Caco-2 (cell line): ENCODE measurements at regions of chr1 and their contacts with region 1.

Region 1: GRCh38 chr1:153494976-153495535 is 34.6 kb upstream of the S100A7 start:
- DNase-seq: peak; percentile 82 to 90
- H3K4me3 ChIP-seq: no peak overlapping the region
- H3K4me3 Mint-ChIP-seq: no peak overlapping the region
- H3K27ac Mint-ChIP-seq: peak overlapping the region; percentile 17
- H3K4me1 ChIP-seq: no peaks in the 10 kb centered on the region
- H3K4me1 Mint-ChIP-seq: no peaks in the 10 kb centered on the region
- H3K27me3 ChIP-seq: no peaks in the 10 kb centered on the region
- H3K27me3 Mint-ChIP-seq: peaks cover 16% of the 10 kb centered on the region
- CTCF ChIP-seq: peak; percentile 89 to 92

Region 2: DNA sequence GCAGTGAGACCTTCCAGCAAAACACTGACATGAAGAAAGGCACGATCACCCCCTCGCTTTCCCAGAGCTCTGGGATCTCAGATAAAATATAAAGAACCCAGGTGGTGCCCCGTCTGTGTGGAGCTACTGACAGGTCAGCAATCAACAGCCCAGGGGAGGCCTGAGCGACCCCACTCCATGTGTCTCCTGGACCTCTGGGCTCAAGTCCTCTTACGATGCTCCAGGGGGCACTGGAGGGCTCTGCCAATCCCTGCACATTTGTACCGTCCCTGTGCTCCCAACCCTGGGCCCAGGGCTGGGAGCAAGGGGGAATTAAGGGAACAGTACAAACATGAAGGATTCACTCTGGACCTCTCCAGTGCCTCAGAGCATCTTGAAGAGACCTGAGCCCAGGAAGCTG is 66.3 kb before region 1 on chr1:
- CTCF ChIA-PET with region 1: no interaction called
- POLR2A ChIA-PET with region 1: no interaction called
- intact Hi-C with region 1: loop called (anchors 2 kb)
- DNase-seq: no peak
- H3K4me3 ChIP-seq: no peak overlapping the region
- H3K4me3 Mint-ChIP-seq: no peak overlapping the region
- H3K27ac Mint-ChIP-seq: no peak overlapping the region
- H3K4me1 ChIP-seq: no peaks in the 10 kb centered on the region
- H3K4me1 Mint-ChIP-seq: no peaks in the 10 kb centered on the region
- H3K27me3 ChIP-seq: no peaks in the 10 kb centered on the region
- H3K27me3 Mint-ChIP-seq: peaks cover 19% of the 10 kb centered on the region
- CTCF ChIP-seq: no peak

Region 3: DNA sequence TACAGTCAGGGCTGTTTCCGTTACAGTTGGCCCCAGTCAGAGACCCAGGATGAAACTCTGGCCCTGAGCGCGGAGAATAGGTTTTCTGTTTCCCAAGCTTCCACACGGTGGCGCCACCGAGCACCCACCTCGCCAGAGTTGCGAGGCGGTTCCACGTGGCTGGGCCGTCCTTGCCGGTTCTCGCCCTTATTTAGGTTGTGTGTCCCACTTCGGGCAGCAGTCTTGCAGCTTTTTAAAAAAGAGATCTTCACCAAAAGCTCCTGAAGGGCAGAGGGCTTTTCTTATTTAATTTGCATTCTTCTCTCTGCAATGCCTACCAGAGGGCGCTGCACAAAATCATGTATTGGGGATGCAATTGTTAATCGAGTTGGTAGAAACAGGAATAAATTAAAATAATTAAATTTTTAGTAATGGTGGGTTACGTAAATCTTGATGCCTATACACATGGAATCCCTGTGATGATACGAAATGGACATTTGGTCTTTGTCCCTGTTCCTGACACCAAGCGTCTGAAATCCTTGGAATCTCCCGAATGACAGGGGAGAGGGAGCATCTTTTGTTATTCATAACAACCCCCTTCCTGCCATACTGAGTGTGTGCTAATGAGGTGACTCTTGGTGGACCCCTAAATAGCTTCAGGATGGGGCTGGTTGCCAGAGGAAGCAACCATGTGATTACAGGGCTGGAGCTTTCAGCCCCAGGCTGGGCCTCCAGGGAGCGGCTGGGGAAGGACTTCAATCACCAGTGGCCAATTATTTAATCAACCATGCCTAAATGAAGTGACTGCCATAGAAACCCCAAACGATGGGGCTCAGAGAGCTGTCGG is 29.0 kb before region 1 on chr1:
- CTCF ChIA-PET with region 1: interaction called, 7 read pairs
- POLR2A ChIA-PET with region 1: no interaction called
- intact Hi-C with region 1: loop called (anchors 1 kb)
- DNase-seq: peak in 1 of 2 experiments; percentile 50
- H3K4me3 ChIP-seq: no peak overlapping the region
- H3K4me3 Mint-ChIP-seq: no peak overlapping the region
- H3K27ac Mint-ChIP-seq: no peak overlapping the region
- H3K4me1 ChIP-seq: no peaks in the 10 kb centered on the region
- H3K4me1 Mint-ChIP-seq: no peaks in the 10 kb centered on the region
- H3K27me3 ChIP-seq: no peaks in the 10 kb centered on the region; the same call in 1 of the 2 replicates
- H3K27me3 Mint-ChIP-seq: peaks cover 11% of the 10 kb centered on the region
- CTCF ChIP-seq: peak; percentile 51 to 54

Region 4: DNA sequence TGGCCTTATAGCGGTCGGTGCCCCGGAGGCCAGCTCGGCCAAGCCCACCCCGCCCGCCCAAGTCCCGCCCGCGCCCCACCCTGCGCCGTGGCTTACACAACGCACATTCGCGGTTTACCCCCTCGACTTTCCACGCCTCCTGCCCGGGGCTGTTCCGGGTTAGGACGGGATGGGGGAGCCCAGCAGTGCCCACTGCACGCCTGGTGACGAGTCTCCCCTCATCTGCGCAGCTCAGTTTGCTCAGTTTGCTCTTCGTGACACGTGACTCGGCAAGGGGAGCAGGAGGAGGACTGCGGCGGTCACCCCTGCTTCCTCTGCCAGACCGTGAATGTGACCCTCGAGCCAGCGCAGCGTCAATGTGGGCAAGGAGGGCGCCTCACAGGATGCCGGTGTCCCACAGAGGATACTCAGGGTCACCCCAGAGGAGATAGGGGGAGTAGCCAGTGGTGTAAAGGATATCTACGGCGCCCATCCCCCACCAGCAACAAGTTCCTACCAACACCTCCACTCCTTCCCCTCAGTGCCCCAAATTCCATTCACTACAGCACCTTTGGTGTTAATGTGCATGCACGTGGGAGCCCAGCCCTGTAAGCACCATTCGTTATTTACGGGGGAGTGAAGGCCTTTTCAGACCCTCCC is 41.1 kb after region 1 on chr1:
- CTCF ChIA-PET with region 1: no interaction called
- POLR2A ChIA-PET with region 1: no interaction called
- intact Hi-C with region 1: no loop called
- DNase-seq: peak; percentile 69 to 81
- H3K4me3 ChIP-seq: peak overlapping the region; percentile 44
- H3K4me3 Mint-ChIP-seq: peak overlapping the region; percentile 95
- H3K27ac Mint-ChIP-seq: peak overlapping the region; percentile 94
- H3K4me1 ChIP-seq: peaks cover 37% of the 10 kb centered on the region
- H3K4me1 Mint-ChIP-seq: peaks cover 31% of the 10 kb centered on the region
- H3K27me3 ChIP-seq: no peaks in the 10 kb centered on the region
- H3K27me3 Mint-ChIP-seq: no peaks in the 10 kb centered on the region
- CTCF ChIP-seq: no peak

Region 5: DNA sequence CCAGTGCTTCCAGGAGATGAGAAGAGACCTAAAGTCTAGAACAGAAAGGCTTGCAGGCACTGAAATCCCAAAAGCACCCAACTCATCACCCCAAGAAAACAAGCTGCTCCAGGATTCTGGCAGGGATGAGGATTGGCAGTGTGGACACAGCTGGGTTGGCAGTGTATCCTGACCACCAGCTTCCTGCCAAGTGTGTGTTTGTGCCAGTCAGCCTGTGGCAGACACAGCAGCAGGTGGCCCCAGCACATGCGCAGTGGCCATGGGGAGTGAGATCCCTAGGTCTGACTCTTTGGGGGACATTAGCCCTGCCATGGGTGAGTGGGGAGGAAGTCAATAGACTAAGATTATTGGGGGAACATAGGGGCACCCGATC is 154.8 kb after region 1 on chr1:
- CTCF ChIA-PET with region 1: no interaction called
- POLR2A ChIA-PET with region 1: no interaction called
- intact Hi-C with region 1: no loop called
- DNase-seq: peak in 1 of 2 experiments; percentile 25
- H3K4me3 ChIP-seq: no peak overlapping the region
- H3K4me3 Mint-ChIP-seq: peak overlapping the region; percentile 16
- H3K27ac Mint-ChIP-seq: peak overlapping the region; percentile 48
- H3K4me1 ChIP-seq: peaks cover 32% of the 10 kb centered on the region
- H3K4me1 Mint-ChIP-seq: peaks cover 31% of the 10 kb centered on the region
- H3K27me3 ChIP-seq: no peaks in the 10 kb centered on the region
- H3K27me3 Mint-ChIP-seq: no peaks in the 10 kb centered on the region
- CTCF ChIP-seq: no peak